Mucosa of descending colon (tissue), 3 donors: ENCODE measurements at regions of chr16 and their contacts with region 1.

Region 1: GRCh38 chr16:71276589-71277334 is 12.4 kb downstream of the CMTR2 start:
- DNase-seq: no peak
- ATAC-seq: no peak
- H3K4me3 ChIP-seq: no peak overlapping the region
- H3K4me1 ChIP-seq: no peaks in the 10 kb centered on the region
- CTCF ChIP-seq: no peak

Region 2: GRCh38 chr16:71205482-71206131 is 71.2 kb before region 1 on chr16:
- intact Hi-C with region 1: loop called in 1 of 2 experiments (anchors 2 kb)
- DNase-seq: no peak
- ATAC-seq: no peak
- H3K4me3 ChIP-seq: no peak overlapping the region
- H3K4me1 ChIP-seq: no peaks in the 10 kb centered on the region
- CTCF ChIP-seq: no peak

Region 3: GRCh38 chr16:71226618-71227141 is 50.1 kb before region 1 on chr16:
- intact Hi-C with region 1: no loop called
- DNase-seq: no peak
- ATAC-seq: no peak
- H3K4me3 ChIP-seq: no peak overlapping the region
- H3K4me1 ChIP-seq: no peaks in the 10 kb centered on the region
- CTCF ChIP-seq: no peak

Region 4: GRCh38 chr16:71600822-71601221 is 324.1 kb after region 1 on chr16:
- intact Hi-C with region 1: no loop called
- DNase-seq: no peak
- ATAC-seq: no peak
- H3K4me3 ChIP-seq: no peak overlapping the region
- H3K4me1 ChIP-seq: no peaks in the 10 kb centered on the region
- CTCF ChIP-seq: no peak